ENCODE measurements at regions of chr7 and their contacts with region 1.

Region 1: DNA sequence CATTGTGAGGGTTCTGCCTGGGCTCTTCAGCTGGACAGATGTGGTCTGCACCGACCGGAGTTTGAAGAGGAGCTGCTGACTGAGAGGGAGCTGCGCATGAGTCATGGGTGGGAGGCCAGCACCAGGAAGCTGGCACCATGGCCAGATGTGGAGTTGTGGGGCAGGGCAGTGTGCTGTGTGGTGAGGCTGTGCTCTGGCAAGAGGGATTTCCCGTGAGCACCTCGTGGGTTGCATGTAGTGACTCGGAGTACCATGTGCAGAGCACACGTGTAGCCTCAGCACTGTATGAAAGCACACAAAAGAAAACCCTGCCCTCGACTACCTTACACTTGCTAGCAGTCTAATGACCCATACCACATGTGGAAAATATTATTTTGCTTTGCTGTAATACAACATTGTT is 103.4 kb downstream of the WNT2 start:
- DNase-seq: no peak
- H3K4me3 ChIP-seq: no peak overlapping the region
- H3K27ac ChIP-seq: no peak overlapping the region
- H3K4me1 ChIP-seq: no peaks in the 10 kb centered on the region
- H3K27me3 ChIP-seq: no peaks in the 10 kb centered on the region
- CTCF ChIP-seq: no peak
- POLR2A ChIP-seq: no peak

Region 2: GRCh38 chr7:116886543-116887156 is 332.8 kb before region 1 on chr7:
- intact Hi-C with region 1: no loop called
- DNase-seq: no peak
- H3K4me3 ChIP-seq: no peak overlapping the region
- H3K27ac ChIP-seq: no peak overlapping the region
- H3K4me1 ChIP-seq: peaks cover 0 to 52% (median 11%) of the 10 kb centered on the region in 6 donors
- H3K27me3 ChIP-seq: no peaks in the 10 kb centered on the region
- CTCF ChIP-seq: no peak
- POLR2A ChIP-seq: no peak

Region 3: DNA sequence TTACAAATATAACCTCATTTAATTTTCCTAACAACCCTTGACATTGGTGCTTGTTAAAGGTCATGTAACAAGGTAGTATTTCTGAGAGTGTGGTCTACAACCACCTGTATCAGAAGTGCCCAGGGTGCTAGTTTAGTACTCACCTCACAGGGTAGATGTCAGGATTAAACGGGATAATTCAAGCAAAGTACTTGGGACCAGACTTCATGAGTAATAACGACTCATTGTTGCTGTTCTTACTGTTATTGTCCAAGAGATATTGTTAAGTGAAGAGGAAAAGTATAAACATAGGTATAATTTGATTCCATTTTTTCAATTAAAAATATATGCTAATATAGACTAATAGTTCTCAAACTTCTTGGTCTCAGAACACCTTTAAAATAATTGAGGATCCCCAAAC is 75.9 kb before region 1 on chr7:
- intact Hi-C with region 1: no loop called
- DNase-seq: no peak
- H3K4me3 ChIP-seq: no peak overlapping the region
- H3K27ac ChIP-seq: no peak overlapping the region
- H3K4me1 ChIP-seq: peaks cover 0 to 14% (median 0%) of the 10 kb centered on the region in 6 donors
- H3K27me3 ChIP-seq: no peaks in the 10 kb centered on the region
- CTCF ChIP-seq: no peak
- POLR2A ChIP-seq: no peak

Region 4: GRCh38 chr7:117385340-117386109 is 166.0 kb after region 1 on chr7:
- intact Hi-C with region 1: loop called (anchors 5 kb)
- DNase-seq: no peak
- H3K4me3 ChIP-seq: no peak overlapping the region
- H3K27ac ChIP-seq: no peak overlapping the region
- H3K4me1 ChIP-seq: no peaks in the 10 kb centered on the region
- H3K27me3 ChIP-seq: no peaks in the 10 kb centered on the region
- CTCF ChIP-seq: no peak
- POLR2A ChIP-seq: no peak